Activated naive CD4-positive, alpha-beta T cell treated with anti-CD3 and anti-CD28 coated beads for 36 hours (primary cell): ENCODE measurements at regions of chr1 and their contacts with region 1.

Region 1: GRCh38 chr1:40862008-40862863 is at the start of gene CITED4:
- DNase-seq: peak; percentile 95
- H3K4me3 Mint-ChIP-seq: peak within 1 kb of the TSS; percentile 92
- H3K27ac Mint-ChIP-seq: peak within 1 kb of the TSS; percentile 95
- H3K4me1 Mint-ChIP-seq: peaks cover 11% of the 10 kb centered on the region
- H3K27me3 Mint-ChIP-seq: peaks cover 8% of the 10 kb centered on the region
- total RNA-seq, gene CITED4: 2.4 TPM

Region 2: DNA sequence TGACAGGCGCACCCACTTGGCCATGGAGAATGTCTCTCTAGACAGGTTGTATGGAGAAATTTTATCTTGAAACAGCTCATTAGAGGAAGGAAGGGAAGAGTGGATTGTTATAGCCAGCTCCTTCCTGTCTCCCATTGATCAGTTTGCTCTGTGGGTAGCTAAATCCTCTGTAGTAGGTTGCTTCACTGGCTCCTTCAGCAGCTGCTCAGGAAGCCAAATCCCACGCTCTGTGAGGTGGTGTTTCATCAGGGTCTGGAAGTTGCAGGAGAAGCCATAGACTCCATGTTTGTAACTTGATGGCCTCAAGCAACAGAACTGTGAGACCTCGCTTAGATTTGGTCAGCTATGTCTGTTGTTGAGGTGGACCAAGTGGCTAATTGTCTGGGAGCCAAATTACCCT is 177.6 kb before region 1 on chr1:
- CTCF ChIA-PET with region 1: no interaction called
- intact Hi-C with region 1: no loop called
- DNase-seq: no peak
- H3K4me3 Mint-ChIP-seq: no peak overlapping the region
- H3K27ac Mint-ChIP-seq: no peak overlapping the region
- H3K4me1 Mint-ChIP-seq: peaks cover under 1% of the 10 kb centered on the region
- H3K27me3 Mint-ChIP-seq: no peaks in the 10 kb centered on the region

Region 3: GRCh38 chr1:40722636-40723035 is 139.6 kb before region 1 on chr1:
- CTCF ChIA-PET with region 1: no interaction called
- intact Hi-C with region 1: no loop called
- DNase-seq: no peak
- H3K4me3 Mint-ChIP-seq: no peak overlapping the region
- H3K27ac Mint-ChIP-seq: no peak overlapping the region
- H3K4me1 Mint-ChIP-seq: peaks cover 44% of the 10 kb centered on the region
- H3K27me3 Mint-ChIP-seq: no peaks in the 10 kb centered on the region

Region 4: DNA sequence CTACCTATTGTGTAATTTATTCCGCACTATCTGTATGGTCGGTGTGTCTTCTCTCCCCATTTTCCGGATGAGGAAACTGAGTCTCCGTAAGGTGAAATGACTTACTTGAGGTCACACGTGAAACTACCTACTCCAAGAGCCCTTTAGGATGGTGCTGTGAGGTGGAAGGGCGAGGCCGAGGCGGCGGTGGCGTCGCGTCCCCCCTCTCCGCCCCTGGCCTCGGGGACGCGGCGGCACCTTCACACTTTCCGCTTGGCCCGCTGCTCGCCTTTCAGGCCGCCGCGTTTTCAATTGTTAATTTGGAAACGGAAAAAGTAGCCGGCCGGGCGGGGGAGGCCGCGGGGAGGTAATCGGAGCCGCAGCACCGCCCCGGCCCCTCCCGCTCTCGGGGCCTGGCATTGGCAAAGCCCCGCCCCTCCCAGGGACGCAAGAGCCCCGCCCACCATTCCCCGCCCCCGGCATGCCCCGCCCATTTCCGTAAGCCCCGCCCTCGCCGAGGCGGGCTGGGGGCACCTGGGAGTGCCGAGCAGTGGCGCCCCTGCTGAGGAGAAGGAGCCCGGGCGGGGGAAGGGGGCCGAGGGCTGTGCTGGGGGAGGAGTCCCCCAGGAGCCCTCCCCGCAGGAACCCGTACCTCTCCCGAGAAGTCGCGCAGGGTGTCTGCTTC is 60.0 kb before region 1 on chr1:
- CTCF ChIA-PET with region 1: no interaction called
- intact Hi-C with region 1: loop called (anchors 1 kb)
- DNase-seq: peak; percentile 88
- H3K4me3 Mint-ChIP-seq: peak overlapping the region; percentile 38
- H3K27ac Mint-ChIP-seq: no peak overlapping the region
- H3K4me1 Mint-ChIP-seq: peaks cover 25% of the 10 kb centered on the region
- H3K27me3 Mint-ChIP-seq: no peaks in the 10 kb centered on the region

Region 5: DNA sequence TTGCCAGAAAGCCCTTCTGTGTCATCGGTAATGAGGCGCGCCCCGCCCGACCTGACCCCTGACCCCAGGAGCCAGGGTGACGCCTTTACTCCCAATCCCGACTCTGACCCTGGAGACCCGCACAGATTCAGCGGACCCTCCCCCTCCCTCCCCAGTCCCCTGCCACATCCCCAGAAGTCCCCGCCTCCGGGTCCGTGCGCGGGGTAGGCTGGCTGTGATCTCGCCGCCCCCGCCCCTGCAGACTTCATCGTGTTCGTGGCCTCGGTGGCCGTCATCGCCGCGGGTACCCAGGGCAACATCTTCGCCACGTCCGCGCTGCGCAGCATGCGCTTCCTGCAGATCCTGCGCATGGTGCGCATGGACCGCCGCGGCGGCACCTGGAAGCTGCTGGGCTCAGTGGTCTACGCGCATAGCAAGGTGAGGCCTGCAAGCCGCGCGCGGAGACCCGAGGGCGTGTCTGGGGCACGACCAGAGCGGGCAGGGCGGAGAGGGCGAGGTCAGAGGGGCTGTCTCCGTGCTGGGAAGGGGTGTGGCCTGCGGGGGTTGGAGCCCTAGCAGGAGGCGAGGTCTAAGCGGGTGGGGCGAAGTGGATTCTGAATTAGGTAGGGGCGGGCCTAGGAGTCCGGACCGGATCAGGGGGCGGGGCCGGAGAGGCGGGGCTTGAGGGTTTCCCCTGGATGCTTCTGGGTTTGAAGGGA is 43.8 kb before region 1 on chr1:
- CTCF ChIA-PET with region 1: no interaction called
- intact Hi-C with region 1: loop called (anchors 1 kb)
- DNase-seq: peak; percentile 91
- H3K4me3 Mint-ChIP-seq: peak overlapping the region; percentile 75
- H3K27ac Mint-ChIP-seq: no peak overlapping the region
- H3K4me1 Mint-ChIP-seq: peaks cover 12% of the 10 kb centered on the region
- H3K27me3 Mint-ChIP-seq: no peaks in the 10 kb centered on the region

Region 6: GRCh38 chr1:40877698-40878097 is 15.5 kb after region 1 on chr1:
- CTCF ChIA-PET with region 1: no interaction called
- intact Hi-C with region 1: loop called (anchors 1 kb)
- DNase-seq: peak; percentile 46
- H3K4me3 Mint-ChIP-seq: no peak overlapping the region
- H3K27ac Mint-ChIP-seq: peak overlapping the region; percentile 50
- H3K4me1 Mint-ChIP-seq: peaks cover 30% of the 10 kb centered on the region
- H3K27me3 Mint-ChIP-seq: peaks cover 6% of the 10 kb centered on the region

Region 7: DNA sequence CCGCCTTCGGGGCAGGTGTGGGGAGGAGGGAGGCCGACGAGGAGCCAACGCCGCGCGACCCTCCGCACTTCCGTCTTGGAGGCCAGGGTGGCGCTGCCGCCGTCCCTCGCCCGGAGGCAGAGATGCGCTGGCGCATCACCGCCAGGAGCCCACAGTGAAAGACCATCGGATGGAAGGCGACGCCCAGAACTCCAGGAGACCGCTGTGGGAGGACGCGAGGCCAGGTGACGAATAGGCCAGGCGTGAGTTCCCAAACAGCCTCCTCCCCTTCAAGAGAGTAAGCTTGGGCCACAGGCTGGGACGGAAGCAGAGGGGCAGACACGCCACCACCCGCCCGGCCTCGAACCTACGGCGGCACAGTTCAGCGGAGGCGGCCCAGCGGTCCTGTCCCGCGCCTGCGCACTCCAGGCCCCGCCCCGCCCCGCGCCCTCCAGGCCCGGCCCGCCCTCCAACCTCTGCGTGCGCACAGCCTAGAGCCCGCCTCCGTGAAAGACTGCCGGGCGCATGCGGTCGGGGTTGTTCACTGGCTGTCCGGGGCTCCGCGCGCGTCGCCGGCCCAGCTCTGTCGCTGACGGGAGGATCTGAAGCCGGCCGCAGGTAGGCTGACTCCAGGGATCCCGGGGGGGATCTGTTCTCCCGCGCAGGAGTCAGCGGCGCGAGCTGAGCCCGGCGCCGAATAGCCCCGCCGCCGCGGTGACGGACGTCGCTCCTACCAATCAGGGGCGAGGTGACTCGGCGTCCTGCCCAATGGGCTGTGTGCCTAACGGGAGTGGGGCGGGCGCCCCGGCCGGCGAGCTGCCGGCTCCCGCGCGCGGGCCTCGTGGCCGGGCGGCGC is 117.2 kb after region 1 on chr1 and contains the start of gene CTPS1:
- CTCF ChIA-PET with region 1: no interaction called
- intact Hi-C with region 1: loop called (anchors 1 kb)
- DNase-seq: peak; percentile 96
- H3K4me3 Mint-ChIP-seq: peak within 1 kb of the TSS; percentile 82
- H3K27ac Mint-ChIP-seq: peak within 1 kb of the TSS; percentile 84
- H3K4me1 Mint-ChIP-seq: peaks cover 40% of the 10 kb centered on the region
- H3K27me3 Mint-ChIP-seq: no peaks in the 10 kb centered on the region
- total RNA-seq, gene CTPS1: 74.9 to 75.1 TPM

Region 8: GRCh38 chr1:41003640-41004220 is 141.5 kb after region 1 on chr1:
- CTCF ChIA-PET with region 1: no interaction called
- intact Hi-C with region 1: loop called (anchors 1 kb)
- DNase-seq: peak; percentile 98
- H3K4me3 Mint-ChIP-seq: no peak overlapping the region
- H3K27ac Mint-ChIP-seq: no peak overlapping the region
- H3K4me1 Mint-ChIP-seq: peaks cover 38% of the 10 kb centered on the region
- H3K27me3 Mint-ChIP-seq: no peaks in the 10 kb centered on the region

Region 9: GRCh38 chr1:41241782-41242341 is 379.6 kb after region 1 on chr1 and contains the start of gene SCMH1:
- CTCF ChIA-PET with region 1: no interaction called
- intact Hi-C with region 1: loop called (anchors 10 kb)
- DNase-seq: peak; percentile 54
- H3K4me3 Mint-ChIP-seq: peak within 1 kb of the TSS; percentile 78
- H3K27ac Mint-ChIP-seq: peak within 1 kb of the TSS; percentile 74
- H3K4me1 Mint-ChIP-seq: peaks cover 18% of the 10 kb centered on the region
- H3K27me3 Mint-ChIP-seq: no peaks in the 10 kb centered on the region
- total RNA-seq, gene SCMH1: 17.8 to 20.7 TPM